ENCODE measurements at regions of chr14 and their contacts with region 1.

Region 1: DNA sequence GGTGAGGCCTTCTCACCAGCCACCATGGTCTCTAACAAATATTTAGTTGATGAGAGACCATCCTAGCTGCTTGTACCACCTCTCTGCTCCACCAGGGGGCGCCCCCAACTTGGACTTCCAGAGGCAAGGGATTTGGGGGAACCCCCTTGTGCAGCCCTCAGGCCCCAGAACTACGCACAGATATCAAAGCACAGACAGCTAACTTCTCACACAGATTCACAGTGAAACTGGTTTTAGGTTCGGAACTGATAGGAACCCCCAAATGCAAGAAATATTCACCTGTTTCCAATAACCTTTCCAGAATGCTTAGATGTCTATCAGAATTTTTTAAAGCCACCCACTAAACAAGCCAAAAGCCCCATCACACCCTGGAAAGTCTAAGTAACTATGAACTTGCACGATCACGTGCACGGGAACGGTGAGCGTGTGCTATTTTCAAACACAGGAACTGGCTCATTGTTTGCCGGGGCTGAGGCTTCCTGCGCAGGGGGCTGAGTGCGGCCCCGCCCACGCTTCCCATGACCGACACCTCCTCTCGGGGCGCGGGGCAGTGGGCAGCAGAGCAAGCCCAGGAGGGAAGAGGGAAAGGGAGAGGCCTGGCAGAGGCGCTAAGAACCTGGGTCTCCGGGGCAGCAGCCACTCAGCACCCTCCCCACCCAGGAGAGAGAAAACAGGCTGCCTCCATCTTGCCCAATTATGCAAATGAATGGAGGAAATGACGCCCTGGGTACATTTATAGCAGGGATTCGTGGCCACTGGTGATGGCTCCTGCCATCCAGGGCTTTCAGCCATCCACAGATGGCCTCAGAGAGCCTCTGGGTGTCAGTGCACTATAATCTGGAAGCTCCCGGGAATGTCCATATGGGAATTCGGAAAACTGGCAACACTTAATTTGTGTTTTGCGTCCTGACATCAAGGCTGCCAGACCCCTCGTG is 79.4 kb upstream of the GPR68 start:
- DNase-seq: peak; percentile 89
- ATAC-seq: peak; percentile 83
- H3K4me3 Mint-ChIP-seq: peak overlapping the region; percentile 89
- H3K27ac Mint-ChIP-seq: peak overlapping the region; percentile 100
- H3K4me1 Mint-ChIP-seq: peaks cover 60% of the 10 kb centered on the region
- H3K27me3 Mint-ChIP-seq: no peaks in the 10 kb centered on the region
- CTCF ChIP-seq: no peak

Region 2: DNA sequence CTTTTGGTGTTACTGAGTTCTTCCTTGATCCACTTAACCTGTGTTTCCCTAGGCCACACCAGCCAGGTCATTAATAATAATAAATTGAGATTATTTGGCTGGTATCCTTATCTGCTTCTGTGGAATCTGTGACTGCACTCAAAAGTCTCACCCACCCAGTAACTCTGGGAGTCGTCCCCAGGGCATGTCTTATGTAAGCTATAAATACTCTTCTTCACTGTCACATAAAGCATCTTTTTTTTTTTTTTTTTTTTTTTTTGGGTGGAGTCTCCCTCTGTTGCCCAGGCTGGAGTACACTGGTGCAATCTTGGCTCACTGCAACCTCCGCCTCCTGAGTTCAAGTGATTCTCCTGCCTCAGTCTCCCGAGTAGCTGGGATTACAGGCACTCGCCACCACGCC is 411.3 kb before region 1 on chr14:
- CTCF ChIA-PET with region 1: no interaction called
- POLR2A ChIA-PET with region 1: no interaction called
- intact Hi-C with region 1: no loop called
- DNase-seq: no peak
- ATAC-seq: no peak
- H3K4me3 Mint-ChIP-seq: no peak overlapping the region
- H3K27ac Mint-ChIP-seq: no peak overlapping the region
- H3K4me1 Mint-ChIP-seq: peaks cover 11% of the 10 kb centered on the region
- H3K27me3 Mint-ChIP-seq: no peaks in the 10 kb centered on the region
- CTCF ChIP-seq: no peak

Region 3: GRCh38 chr14:91350813-91351511 is 27.0 kb after region 1 on chr14:
- CTCF ChIA-PET with region 1: interaction called, 23 read pairs
- POLR2A ChIA-PET with region 1: interaction called, 24 read pairs
- intact Hi-C with region 1: loop called (anchors 1 kb)
- DNase-seq: no peak
- ATAC-seq: peak; percentile 60
- H3K4me3 Mint-ChIP-seq: peak overlapping the region; percentile 81
- H3K27ac Mint-ChIP-seq: peak overlapping the region; percentile 85
- H3K4me1 Mint-ChIP-seq: peaks cover 93% of the 10 kb centered on the region
- H3K27me3 Mint-ChIP-seq: no peaks in the 10 kb centered on the region
- CTCF ChIP-seq: no peak

Region 4: GRCh38 chr14:91373591-91374254 is 49.8 kb after region 1 on chr14:
- CTCF ChIA-PET with region 1: interaction called, 18 read pairs
- POLR2A ChIA-PET with region 1: interaction called, 21 read pairs
- intact Hi-C with region 1: loop called (anchors 1 kb)
- DNase-seq: peak; percentile 66
- ATAC-seq: peak; percentile 73
- H3K4me3 Mint-ChIP-seq: peak overlapping the region; percentile 78
- H3K27ac Mint-ChIP-seq: peak overlapping the region; percentile 87
- H3K4me1 Mint-ChIP-seq: peaks cover 98% of the 10 kb centered on the region
- H3K27me3 Mint-ChIP-seq: no peaks in the 10 kb centered on the region
- CTCF ChIP-seq: no peak

Region 5: DNA sequence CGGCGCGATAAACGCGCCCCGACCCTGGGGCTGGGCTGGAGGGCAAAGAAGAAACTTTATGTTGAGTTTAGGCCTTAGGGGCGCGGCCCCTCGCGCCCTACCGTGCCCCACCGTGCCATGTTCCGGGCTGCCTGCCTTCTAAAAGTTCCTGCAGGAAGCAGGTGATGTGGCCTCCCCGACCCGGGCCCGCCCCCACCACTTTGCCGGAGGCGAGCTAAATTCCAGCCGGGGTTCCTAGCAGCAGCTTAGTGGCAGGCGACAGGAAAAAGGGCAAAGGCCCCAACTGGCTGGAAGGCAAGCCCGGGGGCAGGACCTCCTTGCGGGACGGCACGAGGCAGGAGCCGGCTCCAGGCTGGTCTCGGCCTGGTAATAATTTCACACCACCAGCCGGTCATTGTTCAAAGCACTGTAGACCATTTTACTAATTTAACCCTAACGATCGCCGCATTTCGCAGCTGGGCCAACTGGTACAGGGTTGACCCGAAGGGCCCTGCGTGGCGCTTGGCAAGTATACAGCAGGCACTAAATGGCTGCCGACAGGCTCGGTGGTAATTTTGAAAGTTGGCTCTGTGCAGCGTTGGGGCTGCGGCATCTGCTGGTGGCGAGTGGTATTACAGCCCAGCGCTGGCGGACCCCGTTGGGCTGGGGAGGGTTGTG is 94.6 kb after region 1 on chr14:
- CTCF ChIA-PET with region 1: interaction called, 131 read pairs
- POLR2A ChIA-PET with region 1: interaction called, 150 read pairs
- intact Hi-C with region 1: loop called (anchors 1 kb)
- DNase-seq: peak; percentile 84
- ATAC-seq: peak; percentile 37
- H3K4me3 Mint-ChIP-seq: peak overlapping the region; percentile 81
- H3K27ac Mint-ChIP-seq: peak overlapping the region; percentile 93
- H3K4me1 Mint-ChIP-seq: peaks cover 42% of the 10 kb centered on the region
- H3K27me3 Mint-ChIP-seq: no peaks in the 10 kb centered on the region
- CTCF ChIP-seq: peak; percentile 36

Region 6: DNA sequence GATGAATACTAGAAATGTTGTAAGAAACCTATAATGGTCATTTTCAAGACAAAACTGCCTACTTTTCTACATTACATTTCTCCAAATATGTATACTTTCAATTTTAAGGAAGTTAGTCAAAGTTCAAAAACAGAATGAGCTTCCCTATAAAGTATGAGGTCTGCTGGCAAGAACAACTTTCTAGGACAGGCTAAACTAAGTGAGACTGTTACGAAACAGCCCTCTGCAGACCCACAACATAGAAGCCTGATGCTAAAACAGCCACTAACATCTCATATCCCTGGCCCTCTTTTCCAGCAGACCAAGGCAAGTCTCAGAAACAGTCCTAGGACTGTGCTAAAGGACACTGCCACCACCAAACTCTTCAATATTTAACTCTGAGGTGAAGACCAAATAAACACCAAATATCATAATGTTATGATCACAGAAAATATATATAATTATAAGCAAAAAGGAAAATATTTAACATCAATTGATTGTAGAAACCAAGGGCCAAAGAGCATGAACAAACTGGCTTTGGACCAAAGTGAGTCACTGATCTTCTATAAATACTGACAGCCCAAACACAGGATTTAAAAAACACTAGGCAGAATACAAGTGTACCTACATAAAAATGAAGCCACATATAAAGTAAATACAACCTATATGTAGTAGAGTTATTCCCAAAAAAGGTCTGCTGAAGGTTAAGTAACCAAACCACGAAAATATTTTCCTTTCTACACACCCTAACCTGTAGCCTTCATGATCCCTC is 158.5 kb after region 1 on chr14:
- CTCF ChIA-PET with region 1: interaction called, 3 read pairs
- POLR2A ChIA-PET with region 1: no interaction called
- intact Hi-C with region 1: loop called (anchors 1 kb)
- DNase-seq: no peak
- ATAC-seq: no peak
- H3K4me3 Mint-ChIP-seq: no peak overlapping the region
- H3K27ac Mint-ChIP-seq: no peak overlapping the region
- H3K4me1 Mint-ChIP-seq: peaks cover 71% of the 10 kb centered on the region
- H3K27me3 Mint-ChIP-seq: no peaks in the 10 kb centered on the region
- CTCF ChIP-seq: no peak

Region 7: GRCh38 chr14:91996948-91997371 is 673.0 kb after region 1 on chr14:
- CTCF ChIA-PET with region 1: interaction called, 7 read pairs
- POLR2A ChIA-PET with region 1: no interaction called
- intact Hi-C with region 1: loop called (anchors 1 kb)
- DNase-seq: no peak
- ATAC-seq: peak; percentile 66
- H3K4me3 Mint-ChIP-seq: no peak overlapping the region
- H3K27ac Mint-ChIP-seq: peak overlapping the region; percentile 6
- H3K4me1 Mint-ChIP-seq: peaks cover 8% of the 10 kb centered on the region
- H3K27me3 Mint-ChIP-seq: no peaks in the 10 kb centered on the region
- CTCF ChIP-seq: no peak

Measured in activated B cell treated with CpG ODN at 0.5 μM for 24 hours (primary cell).